WTC11 (cell line): ENCODE measurements at regions of chr9 and their contacts with region 1.

Region 1: DNA sequence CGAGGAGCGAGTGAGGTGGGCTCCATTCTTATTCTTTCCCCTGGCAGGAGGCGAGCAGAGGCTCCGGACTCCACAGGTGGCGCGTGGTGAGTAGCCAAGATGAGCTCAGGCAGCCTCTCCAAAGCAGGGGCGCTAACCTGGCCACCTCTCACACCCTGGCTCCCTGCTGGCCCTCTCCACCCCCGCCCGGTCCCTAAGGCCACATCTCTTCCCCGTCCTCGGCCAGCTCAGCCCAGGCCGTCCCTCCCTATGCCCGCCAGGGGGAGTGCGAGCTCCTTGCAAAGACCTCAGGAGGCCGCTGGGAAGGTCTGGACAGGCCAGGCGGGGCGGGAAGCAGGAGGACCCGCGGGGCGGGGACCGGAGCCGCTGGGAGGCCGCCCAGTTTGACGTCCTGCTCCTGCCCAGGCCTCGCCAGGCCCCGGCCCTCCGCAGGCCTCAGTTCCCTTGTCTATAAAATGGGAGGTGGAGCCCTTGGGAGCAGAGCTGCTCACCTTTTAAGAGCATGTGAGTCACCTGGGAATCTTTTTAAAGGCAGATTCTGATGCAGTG is 46.3 kb upstream of the GGTA1 start:
- DNase-seq: peak; percentile 98
- ATAC-seq: peak; percentile 93
- H3K4me3 Mint-ChIP-seq: peak overlapping the region; percentile 33; the same call in 1 of the 2 replicates
- H3K27ac Mint-ChIP-seq: no peak overlapping the region
- H3K4me1 Mint-ChIP-seq: peaks cover 8% of the 10 kb centered on the region
- H3K27me3 Mint-ChIP-seq: peaks cover 17% of the 10 kb centered on the region
- CTCF ChIP-seq: peak; percentile 85

Region 2: GRCh38 chr9:121478816-121479676 is 66.9 kb before region 1 on chr9:
- CTCF ChIA-PET with region 1: no interaction called
- POLR2A ChIA-PET with region 1: no interaction called
- DNase-seq: no peak
- ATAC-seq: no peak
- H3K4me3 Mint-ChIP-seq: no peak overlapping the region
- H3K27ac Mint-ChIP-seq: no peak overlapping the region
- H3K4me1 Mint-ChIP-seq: peaks cover 13% of the 10 kb centered on the region
- H3K27me3 Mint-ChIP-seq: peaks cover 3% of the 10 kb centered on the region; the same call in 1 of the 2 replicates
- CTCF ChIP-seq: no peak

Region 3: DNA sequence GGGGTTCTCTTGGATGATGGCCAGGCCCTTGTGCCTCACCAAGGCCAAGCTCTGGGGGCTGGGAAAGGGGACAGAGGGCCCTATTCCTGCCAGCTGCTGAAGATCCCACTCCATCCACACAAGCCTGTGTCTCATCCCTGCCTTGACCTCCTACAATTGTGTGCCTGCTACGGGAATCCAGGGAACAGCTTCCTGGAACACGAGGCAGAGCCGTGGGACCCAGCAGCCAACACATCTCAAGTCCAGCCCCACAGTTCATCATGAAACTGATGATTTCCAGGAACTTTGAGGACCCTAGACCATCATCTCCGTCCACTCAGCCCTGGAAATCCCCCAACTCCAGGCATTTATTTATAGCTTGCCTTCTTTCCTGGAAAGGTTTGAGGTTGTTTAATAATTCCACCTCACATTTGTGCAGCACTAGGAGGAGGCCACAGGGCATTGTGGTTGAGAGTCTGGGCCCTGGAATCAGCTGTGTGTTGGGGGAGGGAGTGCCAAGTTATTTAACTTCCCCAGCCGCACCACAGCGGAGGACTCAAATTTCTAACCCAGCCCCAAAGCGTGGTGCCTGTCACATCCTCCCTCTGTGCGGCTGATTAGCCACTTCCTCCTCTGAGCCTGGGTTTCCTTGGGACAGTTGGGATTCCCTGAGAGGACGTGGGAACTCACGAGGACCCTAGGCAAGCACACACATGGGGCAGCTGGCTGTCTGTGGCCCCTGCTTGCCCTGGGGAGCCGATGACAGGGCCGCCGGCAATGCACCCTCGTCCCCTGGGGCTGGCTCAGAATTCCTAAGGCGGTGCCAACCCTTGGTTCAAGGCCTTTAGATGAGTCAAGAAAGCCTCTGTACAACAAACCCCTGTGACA is 11.9 kb after region 1 on chr9:
- CTCF ChIA-PET with region 1: interaction called, 37 read pairs
- POLR2A ChIA-PET with region 1: no interaction called
- DNase-seq: peak; percentile 49
- ATAC-seq: peak; percentile 85
- H3K4me3 Mint-ChIP-seq: no peak overlapping the region
- H3K27ac Mint-ChIP-seq: peak overlapping the region; percentile 60; the same call in 1 of the 2 replicates
- H3K4me1 Mint-ChIP-seq: peaks cover 28% of the 10 kb centered on the region
- H3K27me3 Mint-ChIP-seq: no peaks in the 10 kb centered on the region
- CTCF ChIP-seq: no peak

Region 4: GRCh38 chr9:121598965-121599871 is 53.3 kb after region 1 on chr9:
- CTCF ChIA-PET with region 1: interaction called, 38 read pairs
- POLR2A ChIA-PET with region 1: no interaction called
- DNase-seq: peak; percentile 94
- ATAC-seq: peak; percentile 83
- H3K4me3 Mint-ChIP-seq: peak overlapping the region; percentile 80
- H3K27ac Mint-ChIP-seq: peak overlapping the region; percentile 36; the same call in 1 of the 2 replicates
- H3K4me1 Mint-ChIP-seq: peaks cover 36% of the 10 kb centered on the region
- H3K27me3 Mint-ChIP-seq: peaks cover 21% of the 10 kb centered on the region
- CTCF ChIP-seq: no peak

Region 5: GRCh38 chr9:121634329-121635261 is 88.6 kb after region 1 on chr9:
- CTCF ChIA-PET with region 1: interaction called, 19 read pairs
- POLR2A ChIA-PET with region 1: no interaction called
- DNase-seq: peak; percentile 70
- ATAC-seq: peak; percentile 88
- H3K4me3 Mint-ChIP-seq: no peak overlapping the region
- H3K27ac Mint-ChIP-seq: peak overlapping the region; percentile 64
- H3K4me1 Mint-ChIP-seq: peaks cover 48% of the 10 kb centered on the region
- H3K27me3 Mint-ChIP-seq: no peaks in the 10 kb centered on the region
- CTCF ChIP-seq: peak; percentile 37

Region 6: GRCh38 chr9:121698627-121699570 is 152.9 kb after region 1 on chr9:
- CTCF ChIA-PET with region 1: interaction called, 23 read pairs
- POLR2A ChIA-PET with region 1: no interaction called
- DNase-seq: peak; percentile 77
- ATAC-seq: peak; percentile 66
- H3K4me3 Mint-ChIP-seq: peak overlapping the region; percentile 56
- H3K27ac Mint-ChIP-seq: no peak overlapping the region
- H3K4me1 Mint-ChIP-seq: peaks cover 35% of the 10 kb centered on the region
- H3K27me3 Mint-ChIP-seq: peaks cover 3% of the 10 kb centered on the region; the same call in 1 of the 2 replicates
- CTCF ChIP-seq: no peak

Region 7: GRCh38 chr9:121935739-121936138 is 389.8 kb after region 1 on chr9:
- CTCF ChIA-PET with region 1: interaction called, 23 read pairs
- POLR2A ChIA-PET with region 1: no interaction called
- DNase-seq: peak; percentile 50
- ATAC-seq: peak; percentile 96
- H3K4me3 Mint-ChIP-seq: no peak overlapping the region
- H3K27ac Mint-ChIP-seq: no peak overlapping the region
- H3K4me1 Mint-ChIP-seq: peaks cover 23% of the 10 kb centered on the region
- H3K27me3 Mint-ChIP-seq: peaks cover 2% of the 10 kb centered on the region; the same call in 1 of the 2 replicates
- CTCF ChIP-seq: no peak